PC-9 (cell line): ENCODE measurements at regions of chr10 and their contacts with region 1.

Region 1: DNA sequence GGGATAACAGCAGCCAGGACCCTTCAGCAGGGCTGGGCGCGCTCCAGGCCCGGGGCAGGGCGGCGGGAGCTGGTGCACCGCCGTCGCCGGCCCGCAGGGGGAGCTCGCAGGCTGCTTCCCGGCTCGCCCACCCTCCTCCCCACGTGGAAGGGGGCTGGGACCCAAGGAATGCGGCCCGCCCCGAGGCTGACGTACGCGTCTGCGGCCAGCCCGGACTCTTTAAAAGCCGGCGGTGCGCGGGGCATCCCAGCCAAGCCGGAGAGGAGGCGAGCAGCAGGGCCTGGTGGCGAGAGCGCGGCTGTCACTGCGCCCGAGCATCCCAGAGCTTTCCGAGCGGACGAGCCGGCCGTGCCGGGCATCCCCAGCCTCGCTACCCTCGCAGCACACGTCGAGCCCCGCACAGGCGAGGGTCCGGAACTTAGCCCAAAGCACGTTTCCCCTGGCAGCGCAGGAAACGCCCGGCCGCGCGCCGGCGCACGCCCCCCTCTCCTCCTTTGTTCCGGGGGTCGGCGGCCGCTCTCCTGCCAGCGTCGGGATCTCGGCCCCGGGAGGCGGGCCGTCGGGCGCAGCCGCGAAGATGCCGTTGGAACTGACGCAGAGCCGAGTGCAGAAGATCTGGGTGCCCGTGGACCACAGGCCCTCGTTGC is at the start of gene PFKFB3:
- DNase-seq: peak; percentile 73 to 96
- H3K4me3 ChIP-seq: peak within 1 kb of the TSS; percentile 90
- H3K27ac ChIP-seq: peak within 1 kb of the TSS; percentile 55
- H3K4me1 ChIP-seq: peaks cover 14% of the 10 kb centered on the region; the same call in 1 of the 2 replicates
- H3K27me3 ChIP-seq: no peaks in the 10 kb centered on the region
- CTCF ChIP-seq: peak; percentile 81
- total RNA-seq, gene PFKFB3: 37.8 and 54.7 TPM in 2 replicates

Region 2: DNA sequence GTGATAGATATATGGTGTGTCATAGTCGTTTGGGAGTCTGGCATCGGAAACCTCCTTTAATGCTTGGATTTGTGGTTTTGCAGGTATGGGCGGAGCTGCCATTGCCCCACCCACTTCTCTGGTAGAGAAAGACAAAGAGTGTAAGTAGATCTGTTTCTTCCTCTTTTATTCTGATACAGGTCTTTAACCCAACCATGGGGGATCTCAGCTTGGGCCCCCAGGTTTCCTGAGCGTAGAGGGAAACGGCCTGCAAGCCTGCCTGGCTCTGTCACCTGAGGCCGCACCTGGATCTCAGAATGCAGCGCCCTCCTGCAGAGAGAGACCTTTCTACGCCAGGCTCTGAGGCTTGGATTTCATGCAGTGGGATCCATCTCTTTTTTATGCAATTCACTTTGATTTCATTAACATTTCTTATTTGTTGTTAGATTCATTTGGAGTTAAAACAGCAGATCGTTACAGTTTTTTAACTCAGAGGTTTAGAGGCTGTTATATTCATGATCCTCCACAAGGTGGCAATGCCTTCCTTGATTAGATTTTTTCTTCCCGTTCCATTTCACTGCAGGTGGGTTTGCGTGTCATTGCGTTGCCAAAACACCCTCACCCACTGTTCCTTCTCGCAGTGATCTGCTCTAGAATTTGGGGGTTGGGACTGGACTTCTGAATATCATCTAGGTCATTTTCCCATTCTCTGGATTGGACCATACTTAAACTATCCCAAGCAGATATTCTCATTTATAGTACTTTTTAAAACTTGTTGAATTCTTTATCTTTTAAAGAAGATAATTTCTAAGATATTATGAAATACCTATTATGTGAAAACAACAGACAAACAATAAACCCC is 94.0 kb before region 1 on chr10:
- CTCF ChIA-PET with region 1: no interaction called
- POLR2A ChIA-PET with region 1: no interaction called
- intact Hi-C with region 1: loop called (anchors 1 kb)
- DNase-seq: peak in 1 of 2 experiments; percentile 31
- H3K4me3 ChIP-seq: no peak overlapping the region
- H3K27ac ChIP-seq: no peak overlapping the region
- H3K4me1 ChIP-seq: peaks cover 9% of the 10 kb centered on the region; the same call in 1 of the 2 replicates
- H3K27me3 ChIP-seq: no peaks in the 10 kb centered on the region
- CTCF ChIP-seq: peak; percentile 80

Region 3: DNA sequence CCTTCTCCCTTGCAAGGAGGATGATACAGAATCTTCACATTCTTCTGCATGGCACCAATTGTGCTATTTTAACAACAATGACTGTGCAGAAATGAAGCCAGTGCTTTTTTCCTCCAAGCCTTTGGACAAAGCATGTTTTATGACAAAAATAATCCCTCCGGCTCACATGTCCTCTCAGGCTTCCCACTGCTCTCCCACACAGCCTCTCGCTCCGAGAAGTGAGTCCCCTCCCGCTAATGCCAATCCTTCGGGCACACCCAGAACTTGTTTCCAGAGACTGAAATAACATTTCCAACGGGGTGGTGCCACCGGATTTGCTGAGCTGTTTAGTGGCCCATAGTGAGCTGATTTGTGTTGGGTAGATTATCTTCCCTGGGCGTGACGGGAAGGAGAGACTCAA is 78.1 kb before region 1 on chr10:
- CTCF ChIA-PET with region 1: interaction called, 3 read pairs
- POLR2A ChIA-PET with region 1: no interaction called
- intact Hi-C with region 1: loop called (anchors 5 kb)
- DNase-seq: peak in 1 of 2 experiments; percentile 23
- H3K4me3 ChIP-seq: no peak overlapping the region
- H3K27ac ChIP-seq: no peak overlapping the region
- H3K4me1 ChIP-seq: peaks cover 4% of the 10 kb centered on the region; the same call in 1 of the 2 replicates
- H3K27me3 ChIP-seq: no peaks in the 10 kb centered on the region
- CTCF ChIP-seq: no peak

Region 4: DNA sequence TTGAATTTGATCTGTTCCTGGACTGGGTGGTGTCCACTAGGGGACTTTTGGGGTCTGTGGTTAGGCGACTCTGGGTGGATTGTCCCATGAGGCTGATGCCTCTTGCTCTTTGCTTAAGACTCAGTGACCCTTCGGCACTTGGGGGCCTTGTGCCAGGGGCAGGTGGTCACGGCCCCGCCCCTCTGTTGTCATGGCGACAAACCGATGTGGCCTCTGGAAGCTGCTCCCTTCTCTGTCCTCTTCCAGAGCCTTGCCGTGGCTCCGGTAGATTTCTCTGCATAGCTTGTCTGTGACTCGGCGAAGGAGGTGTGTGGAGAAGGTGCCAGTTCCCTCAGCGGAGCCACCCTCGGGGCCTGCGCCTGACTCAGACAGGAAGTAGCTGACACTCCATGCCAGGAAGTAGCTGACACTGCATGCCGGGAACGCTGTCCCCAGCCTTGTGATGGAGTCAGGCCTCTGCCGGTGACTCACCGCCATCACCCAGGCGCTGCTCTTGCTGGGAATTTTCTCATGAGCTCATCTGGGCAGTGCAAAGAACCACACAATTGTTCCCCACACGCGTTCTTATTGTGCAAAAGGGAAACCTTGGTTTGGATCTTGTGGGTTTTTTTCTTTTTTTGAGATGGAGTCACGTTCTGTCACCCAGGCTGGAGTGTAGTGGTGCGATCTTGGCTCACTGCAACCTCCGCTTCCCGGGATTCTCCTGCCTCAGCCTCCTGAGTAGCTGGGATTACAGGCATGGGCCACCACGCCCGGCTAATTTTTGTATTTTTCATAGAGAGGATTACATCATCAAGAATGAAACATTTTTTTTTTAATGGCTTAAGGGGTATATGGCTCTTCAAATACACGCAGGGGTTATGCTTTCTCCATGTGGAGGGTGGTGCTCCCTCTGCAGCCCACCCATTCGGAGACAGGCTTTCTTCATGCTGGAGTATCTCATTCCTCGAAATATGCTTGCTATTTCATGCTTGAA is 72.5 kb after region 1 on chr10:
- CTCF ChIA-PET with region 1: no interaction called
- POLR2A ChIA-PET with region 1: no interaction called
- intact Hi-C with region 1: loop called (anchors 5 kb)
- DNase-seq: peak; percentile 94 to 97
- H3K4me3 ChIP-seq: peak overlapping the region; percentile 54
- H3K27ac ChIP-seq: peak overlapping the region; percentile 89
- H3K4me1 ChIP-seq: peaks cover 36% of the 10 kb centered on the region
- H3K27me3 ChIP-seq: no peaks in the 10 kb centered on the region
- CTCF ChIP-seq: no peak

Region 5: DNA sequence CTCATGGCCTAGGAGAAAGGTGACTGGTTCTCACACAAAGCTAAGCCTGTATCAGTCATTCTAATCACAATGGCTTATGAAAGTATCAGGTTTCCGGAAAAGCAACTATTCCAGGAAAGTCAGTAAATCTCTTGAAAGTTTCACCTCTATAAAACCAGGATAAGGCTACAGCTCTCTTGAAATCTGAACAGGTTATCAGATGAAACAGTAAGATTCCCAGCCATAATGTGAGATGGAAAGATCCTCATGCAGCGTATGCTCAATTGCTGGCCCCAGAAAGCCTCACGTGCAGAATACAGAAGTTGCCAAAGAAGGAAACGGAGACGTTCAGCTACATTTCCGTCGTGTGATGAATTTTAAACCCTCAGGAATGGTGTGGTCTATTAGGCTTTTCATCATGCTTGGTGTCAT is 89.9 kb after region 1 on chr10:
- CTCF ChIA-PET with region 1: interaction called, 7 read pairs
- POLR2A ChIA-PET with region 1: no interaction called
- intact Hi-C with region 1: loop called (anchors 2 kb)
- DNase-seq: peak in 1 of 2 experiments; percentile 62
- H3K4me3 ChIP-seq: no peak overlapping the region
- H3K27ac ChIP-seq: peak overlapping the region; percentile 17; the same call in 1 of the 2 replicates
- H3K4me1 ChIP-seq: peaks cover 44% of the 10 kb centered on the region
- H3K27me3 ChIP-seq: no peaks in the 10 kb centered on the region
- CTCF ChIP-seq: no peak

Region 6: GRCh38 chr10:6343305-6344010 is 140.7 kb after region 1 on chr10:
- CTCF ChIA-PET with region 1: no interaction called
- POLR2A ChIA-PET with region 1: interaction called, 11 read pairs
- intact Hi-C with region 1: no loop called
- DNase-seq: no peak
- H3K4me3 ChIP-seq: no peak overlapping the region
- H3K27ac ChIP-seq: no peak overlapping the region
- H3K4me1 ChIP-seq: no peaks in the 10 kb centered on the region
- H3K27me3 ChIP-seq: no peaks in the 10 kb centered on the region
- CTCF ChIP-seq: no peak

Region 7: DNA sequence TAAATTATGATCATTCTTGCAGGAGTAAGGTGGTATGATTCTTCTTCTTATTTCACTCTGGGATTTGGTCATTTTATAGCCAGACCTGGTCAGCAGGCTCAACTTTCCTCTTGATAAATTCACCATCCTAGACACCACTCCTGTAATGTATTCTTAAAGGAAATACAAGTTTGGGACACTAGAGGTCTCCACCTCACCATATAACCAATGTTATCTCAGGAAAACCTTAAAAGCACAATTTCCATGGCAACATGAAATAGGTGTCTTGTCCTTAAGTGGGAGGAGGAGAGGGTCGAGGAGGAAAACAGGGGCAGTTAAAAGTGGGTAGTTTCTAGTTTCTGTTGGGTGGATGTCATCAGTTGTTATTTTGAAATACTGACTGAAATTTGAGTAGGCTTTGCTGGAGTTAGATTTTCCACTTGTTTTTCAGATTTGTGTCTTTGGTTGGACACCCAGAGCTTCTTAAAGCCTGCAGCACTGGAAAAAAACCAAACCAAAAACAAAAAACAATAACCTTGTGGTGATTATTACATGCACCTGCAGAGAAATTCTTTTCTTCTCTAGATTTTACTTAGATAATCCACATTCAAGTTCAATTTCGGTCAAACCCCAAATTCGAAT is 214.2 kb after region 1 on chr10:
- CTCF ChIA-PET with region 1: no interaction called
- POLR2A ChIA-PET with region 1: interaction called, 13 read pairs
- intact Hi-C with region 1: no loop called
- DNase-seq: no peak
- H3K4me3 ChIP-seq: no peak overlapping the region
- H3K27ac ChIP-seq: no peak overlapping the region
- H3K4me1 ChIP-seq: no peaks in the 10 kb centered on the region
- H3K27me3 ChIP-seq: no peaks in the 10 kb centered on the region
- CTCF ChIP-seq: peak; percentile 72